ENCODE measurements at regions of chr4 and their contacts with region 1.

Region 1: GRCh38 chr4:150010525-150011126 is 67.6 kb upstream of the DCLK2 start:
- DNase-seq: peak; percentile 76
- H3K4me3 Mint-ChIP-seq: no peak overlapping the region
- H3K27ac Mint-ChIP-seq: no peak overlapping the region
- H3K4me1 Mint-ChIP-seq: no peaks in the 10 kb centered on the region
- H3K27me3 Mint-ChIP-seq: no peaks in the 10 kb centered on the region
- CTCF ChIP-seq: peak; percentile 64

Region 2: DNA sequence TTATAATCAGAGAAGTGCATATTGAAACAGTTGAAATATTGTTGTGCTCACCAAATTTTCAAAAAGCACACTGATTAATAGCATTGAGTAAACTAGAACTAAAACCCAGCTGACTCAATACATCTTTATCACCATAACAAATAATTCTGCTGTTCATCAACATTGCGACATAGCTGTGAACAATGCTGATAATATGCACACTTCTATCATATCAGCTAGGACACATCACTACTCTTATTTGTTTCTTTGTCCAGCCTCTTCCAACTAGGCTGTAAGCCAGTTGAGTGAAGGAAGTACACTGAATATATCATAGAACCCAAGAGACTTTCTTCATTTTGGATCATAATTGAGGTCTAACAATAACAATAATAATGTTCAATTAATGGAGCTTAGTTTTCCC is 544.7 kb before region 1 on chr4:
- CTCF ChIA-PET with region 1: no interaction called
- POLR2A ChIA-PET with region 1: no interaction called
- intact Hi-C with region 1: no loop called
- DNase-seq: no peak
- H3K4me3 Mint-ChIP-seq: no peak overlapping the region
- H3K27ac Mint-ChIP-seq: no peak overlapping the region
- H3K4me1 Mint-ChIP-seq: no peaks in the 10 kb centered on the region
- H3K27me3 Mint-ChIP-seq: no peaks in the 10 kb centered on the region
- CTCF ChIP-seq: no peak

Region 3: DNA sequence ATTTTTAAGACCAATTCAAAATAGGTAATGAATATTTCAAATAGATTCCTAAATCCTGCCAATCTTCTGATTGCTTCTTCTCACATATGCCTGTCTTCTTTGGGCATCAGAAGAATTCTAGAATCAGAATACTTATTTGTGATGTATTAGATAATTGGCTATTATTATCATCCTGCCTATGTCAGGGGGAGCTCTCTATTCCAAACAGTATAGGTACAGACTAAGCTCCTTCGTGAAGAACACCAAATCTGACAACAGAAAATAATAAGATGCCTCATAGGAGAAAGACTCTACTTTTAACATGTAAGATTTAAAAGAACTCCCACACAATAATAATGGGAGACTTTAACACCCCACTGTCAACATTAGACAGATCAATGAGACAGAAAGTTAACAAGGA is 194.9 kb before region 1 on chr4 and contains the start of gene IQCM:
- CTCF ChIA-PET with region 1: no interaction called
- POLR2A ChIA-PET with region 1: no interaction called
- intact Hi-C with region 1: no loop called
- DNase-seq: no peak
- H3K4me3 Mint-ChIP-seq: no peak within 1 kb of the TSS
- H3K27ac Mint-ChIP-seq: no peak within 1 kb of the TSS
- H3K4me1 Mint-ChIP-seq: no peaks in the 10 kb centered on the region
- H3K27me3 Mint-ChIP-seq: no peaks in the 10 kb centered on the region
- CTCF ChIP-seq: no peak
- total RNA-seq, gene IQCM: not detected in 2 replicates

Region 4: GRCh38 chr4:149999485-150000074 is 11.0 kb before region 1 on chr4:
- CTCF ChIA-PET with region 1: interaction called, 22 read pairs
- POLR2A ChIA-PET with region 1: no interaction called
- intact Hi-C with region 1: no loop called
- DNase-seq: peak; percentile 69
- H3K4me3 Mint-ChIP-seq: no peak overlapping the region
- H3K27ac Mint-ChIP-seq: no peak overlapping the region
- H3K4me1 Mint-ChIP-seq: peaks cover 22% of the 10 kb centered on the region
- H3K27me3 Mint-ChIP-seq: no peaks in the 10 kb centered on the region
- CTCF ChIP-seq: peak; percentile 63

Region 5: DNA sequence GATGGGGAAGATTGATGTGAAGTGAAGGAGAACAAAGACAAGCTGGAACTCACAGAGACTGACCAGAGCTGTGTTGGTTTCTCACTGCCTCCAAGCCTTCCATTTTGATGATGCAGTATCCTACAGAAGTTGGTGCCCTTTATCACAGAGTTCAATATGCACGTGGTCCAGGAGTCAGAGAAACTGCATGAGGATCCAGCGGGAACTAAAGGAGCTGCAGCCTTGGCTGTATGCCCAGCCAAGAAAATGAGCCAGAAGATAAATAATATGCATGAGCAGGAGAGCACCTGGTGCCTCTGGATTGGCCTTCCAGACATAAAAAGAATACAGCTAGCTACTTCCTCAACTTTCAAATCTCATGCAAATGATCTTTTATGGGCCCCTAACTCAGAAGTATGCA is 23.3 kb after region 1 on chr4:
- CTCF ChIA-PET with region 1: interaction called, 12 read pairs
- POLR2A ChIA-PET with region 1: interaction called, 3 read pairs
- intact Hi-C with region 1: no loop called
- DNase-seq: peak; percentile 40
- H3K4me3 Mint-ChIP-seq: no peak overlapping the region
- H3K27ac Mint-ChIP-seq: no peak overlapping the region
- H3K4me1 Mint-ChIP-seq: no peaks in the 10 kb centered on the region
- H3K27me3 Mint-ChIP-seq: no peaks in the 10 kb centered on the region
- CTCF ChIP-seq: no peak

Region 6: DNA sequence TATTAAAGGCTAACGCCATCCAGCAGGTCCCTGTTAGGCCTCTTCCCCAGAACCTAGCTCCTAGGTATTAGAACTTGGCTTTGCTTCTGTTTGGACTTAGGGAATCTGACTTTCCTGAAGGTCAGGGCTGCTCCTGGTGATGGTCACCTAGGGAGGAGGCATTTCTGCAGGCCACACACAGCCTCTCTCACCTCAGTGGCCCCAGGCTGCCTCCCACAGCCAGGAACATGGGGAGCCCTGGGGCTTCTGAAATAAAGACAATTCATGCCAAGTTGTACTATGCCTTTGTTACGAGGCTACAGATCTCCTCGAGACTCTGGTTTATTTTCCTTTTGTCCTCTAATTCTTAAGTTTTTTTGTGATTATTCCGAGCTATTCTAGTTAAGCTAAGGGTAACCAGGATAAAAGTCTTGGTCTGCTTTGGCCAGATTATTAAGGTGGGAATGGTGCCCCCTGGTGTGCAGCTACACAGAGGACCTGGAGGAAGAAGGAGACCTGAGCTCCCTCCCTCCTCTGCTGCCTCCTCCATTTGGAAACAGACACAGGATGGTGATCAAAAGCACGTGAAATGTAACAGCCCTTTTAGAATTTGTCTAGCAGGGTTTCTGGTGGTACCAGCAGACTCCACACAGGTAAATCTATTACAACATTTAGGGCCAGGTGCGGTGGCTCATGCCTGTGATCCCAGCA is 198.7 kb after region 1 on chr4:
- CTCF ChIA-PET with region 1: interaction called, 223 read pairs
- POLR2A ChIA-PET with region 1: no interaction called
- intact Hi-C with region 1: loop called (anchors 1 kb)
- DNase-seq: peak; percentile 73
- H3K4me3 Mint-ChIP-seq: no peak overlapping the region
- H3K27ac Mint-ChIP-seq: no peak overlapping the region
- H3K4me1 Mint-ChIP-seq: peaks cover 6% of the 10 kb centered on the region
- H3K27me3 Mint-ChIP-seq: no peaks in the 10 kb centered on the region
- CTCF ChIP-seq: peak; percentile 58

Region 7: GRCh38 chr4:150229523-150229922 is 218.9 kb after region 1 on chr4:
- CTCF ChIA-PET with region 1: interaction called, 16 read pairs
- POLR2A ChIA-PET with region 1: no interaction called
- intact Hi-C with region 1: no loop called
- DNase-seq: peak; percentile 80
- H3K4me3 Mint-ChIP-seq: no peak overlapping the region
- H3K27ac Mint-ChIP-seq: no peak overlapping the region
- H3K4me1 Mint-ChIP-seq: peaks cover 24% of the 10 kb centered on the region
- H3K27me3 Mint-ChIP-seq: no peaks in the 10 kb centered on the region
- CTCF ChIP-seq: no peak

Measured in MCF 10A (cell line).